ENCODE measurements at regions of chr10 and their contacts with region 1.

Region 1: DNA sequence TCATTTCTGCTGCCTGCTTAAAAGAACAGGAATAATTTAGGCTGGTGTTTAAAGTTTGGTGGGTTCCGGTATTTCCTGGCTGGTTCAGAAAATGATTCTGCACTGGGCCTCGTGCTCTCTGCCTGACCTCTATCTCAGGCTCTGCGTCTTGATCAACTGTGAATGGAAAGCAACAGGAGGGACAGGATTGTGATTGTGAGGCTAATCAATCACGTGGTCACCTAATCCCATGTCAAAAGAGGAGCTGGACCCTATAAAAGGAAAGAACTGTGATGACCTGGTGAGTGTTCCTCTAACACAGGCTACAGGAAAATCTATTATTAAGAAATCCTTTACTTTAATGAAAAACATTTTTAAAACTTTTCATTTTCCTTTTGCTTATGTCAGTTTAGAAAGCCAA is at the start of gene DHX32:
- DNase-seq: no peak
- H3K4me3 ChIP-seq: no peak within 1 kb of the TSS
- H3K27ac ChIP-seq: no peak within 1 kb of the TSS
- H3K4me1 ChIP-seq: 0 out of 4 replicates have a peak, but pooled peaks cover 0 to 5% of the 10 kb centered on the region in 2 experiments
- H3K27me3 ChIP-seq: no peaks in the 10 kb centered on the region
- CTCF ChIP-seq: no peak
- EP300 ChIP-seq: no peak
- RAD21 ChIP-seq: no peak
- polyA plus RNA-seq, gene DHX32: 16.8 and 21.8 TPM in 2 replicates

Region 2: DNA sequence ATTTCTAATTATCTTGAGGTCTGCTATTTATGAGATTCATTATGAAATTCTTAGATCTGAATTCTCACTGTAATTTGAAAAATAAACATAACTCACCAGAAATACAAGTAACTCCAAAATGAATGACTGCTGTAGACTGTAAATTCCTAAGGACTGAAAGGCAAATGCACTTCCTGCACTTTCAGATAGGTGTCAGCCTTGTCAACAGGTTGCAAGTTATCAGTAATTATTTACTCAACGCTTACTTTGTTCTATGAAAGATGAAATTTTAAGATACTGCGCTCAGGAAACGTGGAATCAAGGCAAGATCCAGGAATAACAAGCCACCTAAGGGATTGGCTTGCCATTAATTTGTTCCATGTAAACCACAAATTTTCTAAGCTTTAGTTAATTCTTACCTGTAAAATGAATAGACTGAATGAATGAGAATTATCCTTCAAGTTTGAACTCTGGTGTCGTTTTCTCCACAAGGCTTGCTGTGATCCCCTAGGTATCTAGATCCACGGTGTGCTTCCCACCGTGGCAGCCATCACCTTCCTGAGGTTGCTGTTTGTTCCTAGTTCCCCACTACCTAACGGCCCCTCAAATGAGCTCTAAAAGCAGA is 12.7 kb before region 1 on chr10:
- CTCF ChIA-PET with region 1: interaction called, 19 read pairs
- POLR2A ChIA-PET with region 1: no interaction called
- DNase-seq: peak; percentile 32
- H3K4me3 ChIP-seq: no peak overlapping the region; a peak in 1 of 4 replicates
- H3K27ac ChIP-seq: no peak overlapping the region
- H3K4me1 ChIP-seq: no peaks in the 10 kb centered on the region
- H3K27me3 ChIP-seq: no peaks in the 10 kb centered on the region
- CTCF ChIP-seq: peak; percentile 87
- EP300 ChIP-seq: no peak
- RAD21 ChIP-seq: peak; percentile 74